ENCODE measurements at regions of chr17 and their contacts with region 1.

Region 1: GRCh38 chr17:56499799-56500388 is 93.6 kb upstream of the NOG start:
- DNase-seq: peak; percentile 19 to 40 (median 22)
- ATAC-seq: no peak
- H3K4me3 ChIP-seq: no peak overlapping the region
- H3K27ac ChIP-seq: no peak overlapping the region
- H3K4me1 ChIP-seq: no peaks in the 10 kb centered on the region
- H3K27me3 ChIP-seq: no peaks in the 10 kb centered on the region
- CTCF ChIP-seq: peak; percentile 44 to 65 (median 55); a peak in 5 of 6 replicates
- EP300 ChIP-seq: no peak
- POLR2A ChIP-seq: no peak
- RAD21 ChIP-seq: peak; percentile 36 to 64; a peak in 3 of 4 replicates

Region 2: DNA sequence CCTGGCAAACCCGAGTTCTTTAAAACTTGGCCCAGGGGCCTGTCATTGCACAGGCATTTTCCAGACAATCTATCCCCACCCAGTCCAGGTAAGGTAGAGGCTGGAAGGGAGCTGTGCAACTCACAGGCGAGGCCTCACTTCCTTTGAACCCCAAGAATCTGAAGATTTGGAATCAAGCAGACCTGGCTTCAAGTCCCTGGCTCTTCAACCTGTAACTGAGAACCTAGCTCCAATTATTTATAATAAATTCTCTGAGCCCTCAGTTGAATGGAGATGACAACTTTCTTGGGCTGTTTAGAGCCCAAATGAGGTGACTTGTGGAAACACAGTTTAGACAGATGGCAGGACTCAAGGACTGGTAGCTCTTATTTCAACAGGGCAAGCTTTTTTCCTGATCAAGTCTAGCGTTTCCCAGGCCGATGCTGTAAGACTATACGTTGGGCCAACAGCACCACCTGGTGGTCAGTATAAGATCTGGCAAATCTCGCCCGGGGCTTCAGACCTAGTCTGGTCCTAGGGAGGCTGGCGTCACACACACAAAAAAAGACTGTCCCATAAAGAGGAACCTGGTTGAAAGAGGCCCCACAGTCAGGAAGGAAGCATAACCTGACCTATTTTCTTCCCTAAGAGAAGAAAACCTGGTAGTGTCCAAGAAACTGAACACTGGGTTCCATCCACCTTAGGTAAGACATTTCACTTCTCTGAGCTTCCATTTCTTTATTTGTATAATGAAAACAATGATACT is 215.9 kb after region 1 on chr17:
- CTCF ChIA-PET with region 1: no interaction called
- POLR2A ChIA-PET with region 1: no interaction called
- in situ Hi-C with region 1: loop called (anchors 10 kb)
- intact Hi-C with region 1: loop called (anchors 5 kb)
- DNase-seq: peak; percentile 74 to 83 (median 80)
- ATAC-seq: peak; percentile 99
- H3K4me3 ChIP-seq: no peak overlapping the region
- H3K27ac ChIP-seq: no peak overlapping the region
- H3K4me1 ChIP-seq: no peaks in the 10 kb centered on the region
- H3K27me3 ChIP-seq: peaks cover 2 to 29% of the 10 kb centered on the region in 2 experiments
- CTCF ChIP-seq: peak; percentile 78 to 86 (median 80)
- EP300 ChIP-seq: no peak
- POLR2A ChIP-seq: no peak
- RAD21 ChIP-seq: peak; percentile 75 to 86